ENCODE measurements at regions of chr3 and their contacts with region 1.

Region 1: DNA sequence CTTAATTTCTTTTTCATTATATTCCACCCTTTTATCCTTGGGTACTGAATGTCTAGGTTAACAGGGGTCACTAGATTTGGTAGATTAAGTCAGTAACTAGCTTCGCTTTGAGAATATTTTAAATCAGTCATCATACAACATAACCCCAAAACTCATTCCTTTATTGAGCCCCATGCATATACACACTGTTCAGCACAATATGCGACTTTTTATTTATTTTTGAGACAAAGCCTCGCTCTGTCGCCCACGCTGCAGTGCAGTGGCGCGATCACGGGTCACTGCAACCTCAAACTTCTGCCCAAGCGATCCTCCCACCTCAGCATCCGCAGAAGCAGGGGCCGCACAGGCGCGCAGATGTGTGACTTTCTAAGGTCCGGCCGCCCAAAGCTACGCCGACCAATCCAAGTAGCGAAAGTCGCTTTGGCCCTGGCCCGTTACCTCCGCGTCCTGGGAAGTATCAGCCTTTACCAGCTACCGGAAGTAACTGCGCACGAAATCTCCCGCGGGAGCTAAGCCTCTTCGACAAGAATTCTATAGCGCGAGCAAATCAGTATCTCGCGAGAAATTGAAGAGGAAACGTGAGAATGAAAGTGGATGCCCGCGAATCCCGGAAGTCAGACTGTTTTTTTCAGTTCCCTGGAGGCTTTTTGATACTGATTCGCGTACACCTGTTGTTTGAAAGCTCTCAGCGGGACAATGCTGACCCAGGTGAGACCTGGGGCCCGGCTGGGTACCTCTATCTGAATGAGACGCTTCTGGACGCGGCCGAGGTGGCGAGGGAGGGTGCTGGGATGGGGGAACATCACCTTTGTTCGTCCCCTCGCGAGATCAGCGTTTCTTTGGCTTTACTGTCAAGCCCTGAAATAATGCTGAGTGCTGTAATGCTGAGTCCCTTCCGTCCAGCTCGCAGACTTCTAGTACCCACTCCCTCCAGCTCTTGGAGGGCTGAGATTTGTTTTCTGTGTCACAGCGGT is at the starts of genes DHFR2 and NSUN3:
- DNase-seq: peak; percentile 93
- total RNA-seq, gene DHFR2: 3.4 TPM
- total RNA-seq, gene NSUN3: 6.8 TPM

Region 2: DNA sequence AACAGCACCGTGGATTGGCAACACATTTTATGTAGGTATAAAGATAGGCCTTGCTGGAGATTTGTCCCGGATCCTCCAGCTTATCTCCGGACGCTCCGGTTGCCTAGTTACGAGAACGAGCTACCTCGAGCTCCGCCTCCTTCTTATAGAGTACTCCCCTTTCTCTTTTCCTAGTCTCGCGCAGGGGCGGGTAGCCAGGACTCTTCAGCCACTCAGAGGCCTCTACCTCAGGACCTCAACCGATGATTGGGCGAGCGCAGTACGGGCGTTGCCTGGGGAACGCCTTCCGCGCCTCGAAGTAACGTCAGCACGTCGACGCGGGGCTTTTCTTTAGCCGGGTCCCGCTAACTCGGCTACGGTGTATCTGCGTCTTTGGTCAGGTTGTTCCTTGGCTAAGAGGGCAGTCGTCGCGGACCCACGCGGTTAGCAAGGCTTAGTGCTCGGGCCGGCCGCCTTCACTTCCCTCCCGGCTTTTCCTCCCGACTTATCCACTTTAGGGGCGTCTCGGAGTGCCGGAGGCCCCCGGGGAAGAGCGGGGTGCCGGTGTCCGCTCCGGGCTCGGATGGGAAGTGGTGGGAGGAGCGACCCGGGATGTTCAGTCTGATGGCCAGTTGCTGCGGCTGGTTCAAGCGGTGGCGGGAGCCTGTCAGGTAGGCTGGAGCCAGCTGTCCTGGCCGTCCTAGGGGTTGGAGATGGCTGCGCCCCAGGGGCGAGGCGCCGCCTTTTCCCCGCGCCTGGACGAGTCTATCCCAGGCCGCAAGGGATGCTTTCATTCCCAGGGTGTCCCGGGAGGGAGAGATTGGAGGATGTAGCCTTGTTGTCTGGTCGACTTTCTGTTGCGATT is 82.7 kb before region 1 on chr3 and contains the start of gene ARL13B:
- intact Hi-C with region 1: loop called (anchors 10 kb)
- DNase-seq: peak; percentile 99
- total RNA-seq, gene ARL13B: 9.2 TPM

Region 3: GRCh38 chr3:94024385-94024784 is 38.3 kb before region 1 on chr3:
- intact Hi-C with region 1: no loop called
- DNase-seq: no peak

Region 4: DNA sequence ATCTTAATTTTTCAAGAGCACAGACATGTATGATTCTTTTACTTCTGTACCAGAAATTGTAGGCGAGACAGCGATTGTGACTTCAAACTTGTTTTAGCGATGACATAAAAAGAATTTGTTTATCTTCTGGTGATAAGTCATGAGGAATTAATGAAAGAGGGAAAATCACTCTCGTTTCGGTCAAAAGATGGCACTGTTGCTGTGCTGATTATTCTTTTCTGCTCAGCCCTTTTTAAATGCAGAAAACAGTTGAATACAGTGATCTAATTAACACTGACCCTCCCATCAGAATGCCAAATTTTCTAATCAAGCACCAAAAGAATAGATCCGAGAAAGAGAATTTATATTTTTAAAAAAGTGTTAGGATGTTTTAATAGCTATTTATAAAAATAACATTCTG is 52.8 kb after region 1 on chr3:
- intact Hi-C with region 1: no loop called
- DNase-seq: no peak

Region 5: DNA sequence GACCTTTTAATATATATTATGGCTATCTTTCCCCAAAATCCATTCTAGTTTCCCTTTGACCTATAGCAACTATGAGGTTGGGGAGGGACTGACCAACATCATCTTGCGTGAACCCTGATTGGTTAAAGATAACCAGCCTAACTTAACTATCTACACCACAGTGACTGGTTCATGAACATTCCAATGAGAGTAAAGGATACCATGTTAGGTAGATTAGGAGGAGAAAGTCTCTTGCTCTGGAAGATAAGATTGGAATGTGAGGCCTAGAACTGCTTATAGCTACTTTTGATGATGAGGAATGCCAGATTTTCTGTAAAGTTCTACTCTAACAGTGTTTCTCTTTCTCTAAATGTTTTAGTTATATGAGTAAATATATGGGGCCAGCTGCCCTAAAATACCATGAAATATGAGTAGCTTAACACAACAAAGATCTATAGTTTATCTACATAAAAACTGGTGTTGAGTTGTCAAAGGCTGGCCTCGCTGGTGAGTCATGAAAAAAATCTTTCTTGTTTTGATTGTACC is 481.5 kb after region 1 on chr3:
- intact Hi-C with region 1: no loop called
- DNase-seq: no peak

Measured in cardiac septum (tissue), 1 donor.